ENCODE measurements at regions of chr16 and their contacts with region 1.

Region 1: GRCh38 chr16:3173892-3174617 is 13.9 kb upstream of the OR1F1 start:
- DNase-seq: peak; percentile 61
- ATAC-seq: peak; percentile 10
- H3K4me3 Mint-ChIP-seq: peak overlapping the region; percentile 47
- H3K27ac Mint-ChIP-seq: peak overlapping the region; percentile 26
- H3K4me1 Mint-ChIP-seq: peaks cover 37% of the 10 kb centered on the region
- H3K27me3 Mint-ChIP-seq: peaks cover 51% of the 10 kb centered on the region

Region 2: DNA sequence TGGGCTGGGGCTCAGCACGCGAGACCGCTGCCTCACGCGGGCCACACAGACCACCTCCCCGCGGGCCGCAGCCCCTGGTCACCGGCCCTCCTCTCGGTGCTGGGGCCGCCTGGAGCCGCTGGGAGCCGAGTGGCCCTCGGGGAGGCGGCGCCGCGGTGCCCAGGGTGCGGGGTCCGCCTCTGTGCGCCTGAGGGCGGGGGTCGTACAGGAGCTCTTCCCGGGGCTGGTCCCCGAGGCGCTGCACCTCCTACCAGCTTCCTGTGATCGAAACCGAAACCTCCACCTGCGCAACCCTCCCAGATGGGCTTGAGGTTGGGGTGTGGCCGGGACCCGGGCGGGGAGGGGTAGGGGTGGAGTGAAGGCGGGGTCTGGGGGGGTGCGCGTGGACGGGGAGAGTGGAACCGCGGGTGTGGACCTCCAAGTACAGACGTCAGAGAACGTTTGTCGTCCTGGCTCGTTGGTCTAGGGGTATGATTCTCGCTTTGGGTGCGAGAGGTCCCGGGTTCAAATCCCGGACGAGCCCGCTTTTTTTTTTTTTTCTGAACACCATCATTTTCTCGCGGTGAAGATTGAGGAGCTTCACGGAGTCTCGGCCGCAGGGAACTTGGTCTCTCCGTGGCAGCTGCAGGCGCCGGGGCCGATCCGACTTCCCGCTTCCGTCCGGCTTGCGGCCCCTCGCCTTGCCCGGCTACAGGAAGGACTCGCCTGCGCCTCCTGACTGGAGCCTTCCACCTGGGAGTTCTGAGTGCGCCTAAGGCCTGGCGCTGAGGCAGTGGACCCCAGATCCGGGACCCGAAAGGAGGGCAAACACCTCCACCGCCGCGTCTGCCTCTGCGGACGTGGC is 15.4 kb before region 1 on chr16:
- CTCF ChIA-PET with region 1: interaction called, 4 read pairs
- POLR2A ChIA-PET with region 1: interaction called, 3 read pairs
- intact Hi-C with region 1: loop called in 1 of 2 experiments (anchors 1 kb)
- DNase-seq: peak; percentile 91
- ATAC-seq: peak; percentile 75
- H3K4me3 Mint-ChIP-seq: peak overlapping the region; percentile 87
- H3K27ac Mint-ChIP-seq: peak overlapping the region; percentile 88
- H3K4me1 Mint-ChIP-seq: peaks cover 20% of the 10 kb centered on the region
- H3K27me3 Mint-ChIP-seq: peaks cover 7% of the 10 kb centered on the region

Region 3: DNA sequence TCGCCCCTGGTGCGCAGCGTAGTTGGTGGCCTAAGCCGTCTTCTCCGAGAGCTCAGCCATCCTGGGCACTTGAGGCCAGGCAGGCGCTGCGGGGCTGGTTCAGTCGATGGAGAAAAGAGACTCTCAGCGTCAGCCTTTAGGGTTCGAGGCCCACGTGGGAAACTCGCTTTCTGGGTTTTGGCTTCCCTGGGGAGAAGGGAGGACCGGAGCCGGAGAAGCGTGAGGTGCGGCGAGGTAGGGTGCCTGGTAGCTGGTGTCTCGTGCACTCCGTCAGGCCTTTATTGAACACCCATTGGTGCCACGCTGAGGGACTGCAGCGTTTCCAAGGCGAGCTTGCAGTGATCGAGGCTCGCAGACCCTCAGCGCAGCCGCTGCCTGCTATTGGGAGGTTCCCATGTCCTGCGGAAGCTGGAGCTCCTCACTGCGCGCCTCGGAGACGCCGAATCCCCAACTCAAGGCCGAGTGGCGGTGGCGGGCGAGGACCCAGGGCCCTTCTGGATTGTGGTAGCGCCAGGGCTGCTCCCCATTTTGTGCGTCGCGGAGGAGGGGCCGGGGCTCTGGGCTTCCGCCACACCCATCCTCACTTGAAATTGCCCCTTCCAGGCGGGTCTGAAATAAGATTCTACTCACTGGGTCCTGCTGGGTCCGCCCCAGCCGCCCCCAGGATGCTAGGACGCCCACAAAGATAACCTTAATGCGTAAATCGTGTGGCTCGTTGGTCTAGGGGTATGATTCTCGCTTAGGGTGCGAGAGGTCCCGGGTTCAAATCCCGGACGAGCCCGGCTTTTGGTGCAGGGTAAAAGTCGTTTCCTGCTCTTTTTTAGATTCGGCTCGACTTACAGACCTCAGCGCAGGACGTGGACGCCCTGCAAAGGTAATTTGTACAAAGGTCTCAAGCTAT is 15.1 kb after region 1 on chr16:
- CTCF ChIA-PET with region 1: interaction called, 14 read pairs
- POLR2A ChIA-PET with region 1: interaction called, 3 read pairs
- intact Hi-C with region 1: loop called in 1 of 2 experiments (anchors 1 kb)
- DNase-seq: peak; percentile 78
- ATAC-seq: peak; percentile 42
- H3K4me3 Mint-ChIP-seq: peak overlapping the region; percentile 69
- H3K27ac Mint-ChIP-seq: peak overlapping the region; percentile 72
- H3K4me1 Mint-ChIP-seq: peaks cover 46% of the 10 kb centered on the region
- H3K27me3 Mint-ChIP-seq: peaks cover 66% of the 10 kb centered on the region